ENCODE measurements at regions of chr20 and their contacts with region 1.

Region 1: GRCh38 chr20:22974353-22974752 is 60.8 kb upstream of the SSTR4 start:
- DNase-seq: peak; percentile 35 to 54 (median 52)
- ATAC-seq: peak; percentile 75
- H3K4me3 ChIP-seq: no peak overlapping the region
- H3K27ac ChIP-seq: no peak overlapping the region
- H3K4me1 ChIP-seq: no peaks in the 10 kb centered on the region
- H3K27me3 ChIP-seq: no peaks in the 10 kb centered on the region
- CTCF ChIP-seq: peak; percentile 57 to 69 (median 63)
- EP300 ChIP-seq: no peak
- POLR2A ChIP-seq: no peak
- RAD21 ChIP-seq: peak; percentile 71 to 79

Region 2: DNA sequence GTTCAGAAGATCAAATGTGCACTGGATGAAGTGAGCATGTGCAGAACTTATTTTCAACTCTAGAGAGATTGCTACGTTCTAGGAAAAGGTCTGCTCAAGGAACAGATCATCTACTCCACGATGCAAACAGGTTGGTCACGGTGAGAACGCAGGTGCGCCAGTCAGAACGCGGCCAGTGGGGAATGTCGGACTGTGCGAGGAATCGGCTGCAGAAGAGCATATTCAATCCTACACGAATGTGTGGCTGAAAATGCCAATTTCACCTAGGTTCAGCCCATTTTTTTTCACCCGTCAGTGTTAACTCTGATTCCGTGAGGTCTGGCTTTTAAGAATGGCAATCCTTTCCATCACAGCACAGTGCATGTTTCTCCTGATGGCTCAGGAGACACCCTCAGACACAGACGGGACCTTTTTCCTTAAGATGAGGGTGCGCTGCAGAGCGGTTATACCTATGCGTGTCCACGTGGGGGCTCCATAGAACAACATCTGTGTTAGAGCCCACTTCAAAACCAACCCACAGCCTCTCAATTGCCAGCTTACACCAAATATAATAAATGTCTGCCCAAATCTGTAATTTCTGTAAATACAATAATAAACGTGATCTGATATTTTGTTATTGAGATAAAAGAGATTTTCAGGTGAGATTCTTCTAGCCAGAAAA is 640.3 kb before region 1 on chr20:
- CTCF ChIA-PET with region 1: no interaction called
- POLR2A ChIA-PET with region 1: no interaction called
- in situ Hi-C with region 1: loop called (anchors 25 kb)
- intact Hi-C with region 1: no loop called
- DNase-seq: peak; percentile 63 to 73 (median 72)
- ATAC-seq: peak; percentile 92
- H3K4me3 ChIP-seq: no peak overlapping the region
- H3K27ac ChIP-seq: no peak overlapping the region
- H3K4me1 ChIP-seq: no peaks in the 10 kb centered on the region
- H3K27me3 ChIP-seq: peaks cover 0 to 14% of the 10 kb centered on the region in 2 experiments; a peak in 3 of 5 replicates
- CTCF ChIP-seq: peak; percentile 65 to 80 (median 69); a peak in 5 of 6 replicates
- EP300 ChIP-seq: no peak
- POLR2A ChIP-seq: no peak
- RAD21 ChIP-seq: peak; percentile 53 to 75

Region 3: GRCh38 chr20:22732753-22733152 is 241.6 kb before region 1 on chr20:
- CTCF ChIA-PET with region 1: no interaction called
- POLR2A ChIA-PET with region 1: no interaction called
- in situ Hi-C with region 1: no loop called
- intact Hi-C with region 1: loop called (anchors 5 kb)
- DNase-seq: peak in 1 of 4 experiments; percentile 33
- ATAC-seq: no peak
- H3K4me3 ChIP-seq: no peak overlapping the region
- H3K27ac ChIP-seq: no peak overlapping the region
- H3K4me1 ChIP-seq: no peaks in the 10 kb centered on the region
- H3K27me3 ChIP-seq: no peaks in the 10 kb centered on the region
- CTCF ChIP-seq: peak; percentile 37 to 44 (median 41); a peak in 4 of 6 replicates
- EP300 ChIP-seq: no peak
- POLR2A ChIP-seq: no peak
- RAD21 ChIP-seq: peak; percentile 24 to 47; a peak in 3 of 4 replicates

Region 4: GRCh38 chr20:22846863-22847262 is 127.5 kb before region 1 on chr20:
- CTCF ChIA-PET with region 1: no interaction called
- POLR2A ChIA-PET with region 1: no interaction called
- in situ Hi-C with region 1: no loop called
- intact Hi-C with region 1: loop called (anchors 2 kb)
- DNase-seq: no peak
- ATAC-seq: no peak
- H3K4me3 ChIP-seq: no peak overlapping the region
- H3K27ac ChIP-seq: no peak overlapping the region
- H3K4me1 ChIP-seq: no peaks in the 10 kb centered on the region; a peak in 2 of 5 replicates
- H3K27me3 ChIP-seq: no peaks in the 10 kb centered on the region
- CTCF ChIP-seq: no peak
- EP300 ChIP-seq: no peak
- POLR2A ChIP-seq: no peak
- RAD21 ChIP-seq: no peak

Region 5: DNA sequence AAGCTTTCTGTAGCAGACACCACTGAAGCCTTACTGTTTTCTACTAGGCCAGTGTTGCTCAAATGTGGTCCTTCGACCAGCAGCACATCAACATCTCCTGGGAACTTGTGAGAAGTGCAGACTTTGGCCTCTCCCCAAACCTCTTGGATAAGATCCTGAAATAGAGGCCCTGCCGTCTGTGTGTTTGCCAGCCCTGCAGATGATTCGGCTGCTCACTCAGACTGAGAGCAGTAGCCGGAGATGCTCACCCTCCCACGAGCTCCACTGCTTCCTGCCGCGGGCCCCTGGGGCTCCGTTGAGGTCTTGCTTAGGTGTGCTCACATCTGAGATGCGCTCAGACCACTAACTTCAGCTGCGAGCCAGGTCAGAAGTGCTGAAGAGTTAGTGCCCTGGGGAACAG is 68.7 kb before region 1 on chr20:
- CTCF ChIA-PET with region 1: no interaction called
- POLR2A ChIA-PET with region 1: no interaction called
- in situ Hi-C with region 1: no loop called
- intact Hi-C with region 1: no loop called
- DNase-seq: no peak
- ATAC-seq: no peak
- H3K4me3 ChIP-seq: no peak overlapping the region
- H3K27ac ChIP-seq: no peak overlapping the region
- H3K4me1 ChIP-seq: peaks cover 0 to 26% of the 10 kb centered on the region in 2 experiments
- H3K27me3 ChIP-seq: no peaks in the 10 kb centered on the region
- CTCF ChIP-seq: no peak
- EP300 ChIP-seq: no peak
- POLR2A ChIP-seq: no peak
- RAD21 ChIP-seq: no peak

Region 6: GRCh38 chr20:22921595-22922421 is 52.5 kb before region 1 on chr20:
- CTCF ChIA-PET with region 1: no interaction called
- POLR2A ChIA-PET with region 1: no interaction called
- in situ Hi-C with region 1: no loop called
- intact Hi-C with region 1: no loop called
- DNase-seq: peak in 3 of 4 experiments; percentile 17 to 65 (median 45)
- ATAC-seq: peak; percentile 68
- H3K4me3 ChIP-seq: no peak overlapping the region
- H3K27ac ChIP-seq: peak overlapping the region; percentile 81
- H3K4me1 ChIP-seq: peaks cover 6 to 61% of the 10 kb centered on the region in 2 experiments; a peak in 4 of 5 replicates
- H3K27me3 ChIP-seq: no peaks in the 10 kb centered on the region
- CTCF ChIP-seq: no peak
- EP300 ChIP-seq: peak; percentile 84
- POLR2A ChIP-seq: no peak
- RAD21 ChIP-seq: no peak